Activated CD4-positive, alpha-beta T cell treated with anti-CD3 and anti-CD28 coated beads, Interleukin-2, amount 10 ng/mL, durations not matched to agents 24 days and 14 days (primary cell): ENCODE measurements at regions of chr12 and their contacts with region 1.

Region 1: DNA sequence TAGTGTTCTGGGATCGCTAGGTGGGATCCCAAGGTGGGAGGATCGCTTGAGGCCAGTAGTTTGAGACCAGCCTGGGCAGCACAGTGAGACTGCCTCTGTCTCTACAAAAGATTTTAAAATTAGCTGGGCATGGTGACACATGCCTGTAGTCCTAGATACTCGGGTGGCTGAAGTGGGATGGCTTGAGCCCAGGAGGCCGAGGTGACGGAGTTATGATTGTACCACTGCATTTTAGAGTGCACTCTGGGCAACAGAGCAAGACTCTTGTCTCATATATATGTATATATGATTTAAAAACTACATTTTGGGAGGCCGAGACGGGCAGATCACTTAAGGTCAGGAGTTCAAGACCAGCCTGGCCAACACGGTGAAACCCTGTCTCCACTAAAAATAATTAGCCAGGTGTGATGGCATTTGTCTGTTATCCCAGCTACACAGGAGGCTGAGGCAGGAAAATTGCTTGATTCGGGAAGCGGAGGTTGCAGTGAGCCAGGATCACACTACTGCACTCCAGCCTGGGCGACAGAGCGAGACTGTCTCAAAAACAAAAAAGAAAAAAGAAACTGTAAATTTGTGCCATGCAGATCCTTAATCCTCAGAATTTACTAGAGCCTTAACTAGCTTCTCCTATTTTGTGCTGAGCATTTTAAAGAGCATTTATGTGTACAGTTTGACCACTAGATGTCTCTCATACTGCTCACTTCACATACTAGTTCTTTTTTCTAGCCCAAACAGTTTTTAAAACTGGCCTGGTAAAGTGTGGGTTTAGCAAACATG is 114.8 kb downstream of the MON2 start:
- DNase-seq: no peak
- H3K4me3 Mint-ChIP-seq: no peak overlapping the region
- H3K27ac Mint-ChIP-seq: no peak overlapping the region
- H3K4me1 Mint-ChIP-seq: no peaks in the 10 kb centered on the region
- H3K27me3 Mint-ChIP-seq: no peaks in the 10 kb centered on the region

Region 2: GRCh38 chr12:62603061-62603810 is 21.8 kb after region 1 on chr12:
- intact Hi-C with region 1: no loop called
- DNase-seq: peak; percentile 94
- H3K4me3 Mint-ChIP-seq: peak overlapping the region; percentile 92
- H3K27ac Mint-ChIP-seq: peak overlapping the region; percentile 99
- H3K4me1 Mint-ChIP-seq: peaks cover 30% of the 10 kb centered on the region
- H3K27me3 Mint-ChIP-seq: no peaks in the 10 kb centered on the region

Region 3: GRCh38 chr12:62793256-62794217 is 212.1 kb after region 1 on chr12:
- intact Hi-C with region 1: loop called (anchors 1 kb)
- DNase-seq: peak; percentile 91
- H3K4me3 Mint-ChIP-seq: no peak overlapping the region
- H3K27ac Mint-ChIP-seq: no peak overlapping the region
- H3K4me1 Mint-ChIP-seq: no peaks in the 10 kb centered on the region
- H3K27me3 Mint-ChIP-seq: peaks cover 26% of the 10 kb centered on the region